SK-N-SH (cell line): ENCODE measurements at regions of chrX and their contacts with region 1.

Region 1: GRCh38 chrX:10628906-10629305 is 8.5 kb upstream of the MID1 start:
- DNase-seq: no peak
- H3K4me3 ChIP-seq: no peak overlapping the region
- H3K27ac ChIP-seq: no peak overlapping the region
- H3K4me1 ChIP-seq: no peaks in the 10 kb centered on the region
- H3K27me3 ChIP-seq: no peaks in the 10 kb centered on the region
- CTCF ChIP-seq: no peak
- EP300 ChIP-seq: no peak
- RAD21 ChIP-seq: no peak

Region 2: GRCh38 chrX:10615931-10616775 is 12.8 kb before region 1 on chrX:
- CTCF ChIA-PET with region 1: interaction called, 16 read pairs
- POLR2A ChIA-PET with region 1: no interaction called
- DNase-seq: peak; percentile 67
- H3K4me3 ChIP-seq: no peak overlapping the region; a peak in 1 of 4 replicates
- H3K27ac ChIP-seq: no peak overlapping the region
- H3K4me1 ChIP-seq: peaks cover 0 to 4% of the 10 kb centered on the region in 2 experiments; a peak in 3 of 4 replicates
- H3K27me3 ChIP-seq: peaks cover 13% of the 10 kb centered on the region; the same call in 1 of the 2 replicates
- CTCF ChIP-seq: peak; percentile 75
- EP300 ChIP-seq: no peak; a peak in 1 of 4 replicates
- RAD21 ChIP-seq: peak; percentile 77